ENCODE measurements at regions of chrX and their contacts with region 1.

Region 1: GRCh38 chrX:135591876-135592275 is 71.4 kb downstream of the INTS6L start:
- DNase-seq: no peak
- H3K4me3 ChIP-seq: no peak overlapping the region
- H3K27ac ChIP-seq: no peak overlapping the region
- H3K4me1 ChIP-seq: no peaks in the 10 kb centered on the region
- H3K27me3 ChIP-seq: peaks cover 0 to under 1% of the 10 kb centered on the region in 2 donors
- CTCF ChIP-seq: no peak
- POLR2A ChIP-seq: no peak

Region 2: GRCh38 chrX:135384161-135384836 is 207.6 kb before region 1 on chrX:
- intact Hi-C with region 1: loop called (anchors 5 kb)
- DNase-seq: no peak
- H3K4me3 ChIP-seq: no peak overlapping the region
- H3K27ac ChIP-seq: no peak overlapping the region
- H3K4me1 ChIP-seq: no peaks in the 10 kb centered on the region
- H3K27me3 ChIP-seq: peaks cover 0 to 3% of the 10 kb centered on the region in 2 donors
- CTCF ChIP-seq: no peak
- POLR2A ChIP-seq: no peak

Region 3: DNA sequence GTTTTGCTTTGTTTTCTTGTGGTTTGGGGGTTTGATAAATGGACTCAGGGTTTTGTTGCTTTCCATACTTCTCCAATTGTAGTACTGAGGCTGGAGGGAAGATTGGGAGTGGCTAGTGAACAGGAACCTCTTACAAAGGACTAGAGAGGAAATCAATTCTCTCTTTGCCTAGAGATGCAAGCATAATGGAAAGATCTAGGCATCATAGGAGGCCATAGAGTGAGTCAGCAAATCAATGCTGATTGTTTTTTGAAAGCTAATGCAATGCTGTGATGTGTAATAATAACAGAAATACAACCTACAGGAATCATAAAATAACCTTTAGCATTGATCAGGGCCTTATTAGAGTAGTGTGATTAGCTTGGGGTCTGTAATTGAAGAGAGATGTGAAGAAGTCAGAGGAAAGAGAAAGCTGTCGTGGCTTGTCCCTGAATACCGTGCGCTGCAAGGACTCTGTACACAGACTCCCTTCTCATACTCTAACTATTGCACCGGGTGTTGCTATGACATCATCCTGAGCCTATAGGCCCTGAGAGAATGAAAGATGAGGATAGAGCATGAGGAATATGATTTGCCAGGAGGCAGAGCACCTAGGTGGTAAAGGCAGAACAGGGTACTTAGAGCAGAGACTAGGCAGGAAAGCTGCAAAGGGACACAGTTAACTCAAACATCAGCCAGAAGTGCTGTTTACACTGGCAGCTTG is 1471.2 kb after region 1 on chrX:
- intact Hi-C with region 1: no loop called
- DNase-seq: no peak
- H3K4me3 ChIP-seq: no peak overlapping the region
- H3K27ac ChIP-seq: no peak overlapping the region
- H3K4me1 ChIP-seq: no peaks in the 10 kb centered on the region
- H3K27me3 ChIP-seq: peaks cover 0 to 29% of the 10 kb centered on the region in 2 donors
- CTCF ChIP-seq: no peak
- POLR2A ChIP-seq: no peak